OCI-LY7 (cell line): ENCODE measurements at regions of chr10 and their contacts with region 1.

Region 1: DNA sequence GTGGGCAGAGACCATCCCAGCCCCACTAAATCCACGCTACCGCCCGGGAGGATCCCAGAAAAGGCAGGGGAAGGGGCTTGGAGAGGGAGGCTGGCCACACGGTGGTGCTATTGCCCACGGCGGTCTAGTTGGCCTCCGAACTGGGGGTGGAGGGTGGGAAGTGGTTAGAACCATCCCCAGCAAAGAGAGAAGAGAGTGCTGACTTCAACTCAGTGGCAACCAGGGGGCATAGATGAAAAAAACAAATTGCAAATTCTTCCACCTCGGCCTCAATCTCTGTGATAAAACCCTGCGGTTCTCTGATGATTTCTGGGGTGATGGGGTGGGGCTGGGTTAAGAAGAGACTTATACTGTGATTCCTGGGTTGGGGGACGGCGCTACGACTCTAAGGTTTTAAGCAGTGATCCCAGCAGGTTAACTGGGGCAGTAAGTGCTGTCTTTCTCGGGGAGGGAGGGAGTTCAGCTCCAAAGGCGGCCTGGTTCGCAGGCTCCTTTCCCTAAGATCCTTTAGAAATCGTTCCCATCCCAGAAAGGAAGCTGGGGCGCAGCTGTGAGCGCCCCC is 154.5 kb upstream of the LYZL2 start:
- DNase-seq: peak; percentile 63
- H3K4me3 ChIP-seq: no peak overlapping the region
- H3K27ac ChIP-seq: no peak overlapping the region
- H3K4me1 ChIP-seq: no peaks in the 10 kb centered on the region
- CTCF ChIP-seq: peak; percentile 89

Region 2: DNA sequence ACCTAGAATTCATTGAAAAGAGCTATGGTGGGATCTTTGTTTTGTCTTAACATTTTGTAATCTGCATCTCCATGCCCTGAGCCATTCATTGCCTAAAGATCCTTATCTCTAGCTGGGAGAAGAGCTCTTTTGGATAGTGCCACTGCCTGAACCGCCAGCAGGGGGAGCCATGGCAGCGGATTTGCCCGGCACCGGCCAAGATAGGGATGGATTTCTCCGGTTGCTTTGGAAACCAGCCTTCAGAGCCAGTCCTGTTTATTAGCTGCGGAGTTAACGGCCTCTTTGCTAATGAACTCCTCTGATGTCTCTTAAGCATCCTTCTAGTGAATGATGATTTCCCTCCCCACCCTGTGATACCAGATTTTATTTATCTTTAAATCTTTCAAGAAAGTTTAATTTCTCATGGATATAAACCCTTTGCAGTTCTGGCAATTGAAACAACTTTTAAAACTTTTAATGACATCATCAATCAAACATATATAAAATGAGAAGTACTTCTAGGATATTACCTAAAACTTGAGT is 96.3 kb before region 1 on chr10:
- CTCF ChIA-PET with region 1: no interaction called
- POLR2A ChIA-PET with region 1: no interaction called
- intact Hi-C with region 1: loop called (anchors 5 kb)
- DNase-seq: peak; percentile 81
- H3K4me3 ChIP-seq: no peak overlapping the region
- H3K27ac ChIP-seq: no peak overlapping the region
- H3K4me1 ChIP-seq: peaks cover 21% of the 10 kb centered on the region
- CTCF ChIP-seq: peak; percentile 99

Region 3: DNA sequence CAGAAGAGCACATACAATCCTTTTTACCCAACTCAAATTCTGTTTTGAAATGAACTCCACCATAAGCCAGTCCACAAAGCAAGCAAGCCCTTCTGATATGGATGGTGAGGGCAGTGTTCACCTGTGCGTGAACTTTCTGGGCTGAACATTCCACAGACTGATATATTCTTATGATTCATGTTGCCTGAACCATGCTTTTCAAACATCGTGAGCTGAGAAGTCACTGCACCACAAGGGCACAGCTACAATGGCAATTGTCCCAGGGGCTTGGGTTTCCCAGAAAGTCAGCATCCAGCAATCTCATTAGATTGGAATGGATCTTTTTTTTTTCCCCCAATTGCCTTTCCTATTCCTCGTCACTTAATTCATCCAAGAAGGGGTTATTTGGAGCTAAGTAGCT is 334.5 kb after region 1 on chr10:
- CTCF ChIA-PET with region 1: no interaction called
- POLR2A ChIA-PET with region 1: no interaction called
- intact Hi-C with region 1: no loop called
- DNase-seq: no peak
- H3K4me3 ChIP-seq: no peak overlapping the region
- H3K27ac ChIP-seq: no peak overlapping the region
- H3K4me1 ChIP-seq: no peaks in the 10 kb centered on the region
- CTCF ChIP-seq: no peak

Region 4: GRCh38 chr10:31808258-31809218 is 1024.5 kb after region 1 on chr10:
- CTCF ChIA-PET with region 1: no interaction called
- POLR2A ChIA-PET with region 1: no interaction called
- intact Hi-C with region 1: loop called (anchors 10 kb)
- DNase-seq: peak; percentile 59
- H3K4me3 ChIP-seq: no peak overlapping the region
- H3K27ac ChIP-seq: no peak overlapping the region
- H3K4me1 ChIP-seq: no peaks in the 10 kb centered on the region
- CTCF ChIP-seq: peak; percentile 89